Colonic mucosa (tissue), 4 donors: ENCODE measurements at regions of chr7 and their contacts with region 1.

Region 1: GRCh38 chr7:55432939-55433784 is 68.0 kb downstream of the LANCL2 start:
- DNase-seq: no peak
- H3K4me3 ChIP-seq: no peak overlapping the region
- H3K27ac ChIP-seq: no peak overlapping the region
- H3K4me1 ChIP-seq: peaks cover 5% of the 10 kb centered on the region
- H3K27me3 ChIP-seq: no peaks in the 10 kb centered on the region
- CTCF ChIP-seq: peak; percentile 56

Region 2: DNA sequence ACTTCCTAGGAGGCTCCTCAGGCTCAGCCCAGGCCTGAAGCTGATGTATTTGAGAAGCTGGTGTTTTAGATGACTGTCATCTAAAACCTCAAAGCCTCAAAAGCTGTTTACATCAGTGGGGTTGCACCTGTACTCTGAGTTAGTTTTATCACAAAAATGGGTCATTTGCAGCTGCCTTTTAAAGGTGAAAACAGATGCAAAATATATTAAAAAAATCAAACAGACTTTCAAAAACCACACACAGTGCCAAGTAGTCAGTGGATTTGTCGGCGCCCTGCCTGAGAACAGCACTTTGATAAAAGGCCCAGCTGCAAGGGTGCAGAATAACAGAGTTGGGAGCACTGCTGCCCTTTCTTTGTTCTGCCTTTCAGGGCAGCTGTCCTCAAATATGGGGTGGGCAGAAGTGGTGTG is 36.1 kb after region 1 on chr7:
- intact Hi-C with region 1: no loop called
- DNase-seq: no peak
- H3K4me3 ChIP-seq: no peak overlapping the region
- H3K27ac ChIP-seq: no peak overlapping the region
- H3K4me1 ChIP-seq: no peaks in the 10 kb centered on the region
- H3K27me3 ChIP-seq: no peaks in the 10 kb centered on the region
- CTCF ChIP-seq: no peak

Region 3: DNA sequence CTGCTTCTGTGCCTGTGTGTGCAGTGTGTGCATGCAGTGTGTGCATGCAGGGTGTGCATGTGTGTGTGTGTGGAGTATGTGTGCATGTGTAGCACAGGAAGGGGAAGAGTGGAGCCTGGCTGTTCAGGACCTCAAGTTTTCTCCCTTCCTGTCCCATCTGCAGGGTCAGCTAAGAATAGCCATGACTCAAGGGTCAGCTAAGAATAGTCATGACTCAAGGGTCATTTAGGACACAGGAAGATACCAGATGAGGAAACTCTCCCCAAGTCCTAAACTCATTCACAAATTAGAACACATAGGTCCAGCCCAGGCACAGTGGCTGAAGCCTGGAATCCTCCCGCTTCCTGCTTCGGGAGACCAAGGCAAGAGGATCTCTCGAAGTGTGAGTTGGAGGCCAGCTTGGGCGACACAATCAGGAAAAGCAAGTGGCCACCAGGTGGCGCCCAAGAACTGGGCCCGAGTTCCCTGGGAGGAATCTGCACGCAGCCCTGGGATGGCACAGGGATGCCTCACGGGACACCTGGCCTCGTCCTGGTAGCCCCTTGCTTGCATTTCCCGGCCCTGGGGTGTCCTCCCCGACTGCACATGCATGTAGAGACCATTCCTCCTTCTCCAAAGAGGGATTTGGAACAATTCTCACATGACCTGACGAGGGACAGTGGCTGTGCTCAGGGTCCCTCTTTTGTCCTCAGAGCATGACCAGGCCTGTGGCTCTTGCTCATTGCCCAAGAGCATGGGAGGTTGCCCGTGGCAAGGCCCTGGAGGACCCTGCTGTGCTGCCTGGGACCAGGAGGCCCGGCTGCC is 160.6 kb after region 1 on chr7:
- intact Hi-C with region 1: loop called (anchors 5 kb)
- DNase-seq: peak; percentile 76
- H3K4me3 ChIP-seq: no peak overlapping the region
- H3K27ac ChIP-seq: no peak overlapping the region
- H3K4me1 ChIP-seq: no peaks in the 10 kb centered on the region
- H3K27me3 ChIP-seq: no peaks in the 10 kb centered on the region
- CTCF ChIP-seq: peak; percentile 86